ENCODE measurements at regions of chr6 and their contacts with region 1.

Region 1: GRCh38 chr6:53615633-53616449 is 49.7 kb downstream of the KLHL31 start:
- DNase-seq: peak; percentile 92
- H3K4me3 Mint-ChIP-seq: peak overlapping the region; percentile 66
- H3K27ac Mint-ChIP-seq: peak overlapping the region; percentile 97
- H3K4me1 Mint-ChIP-seq: peaks cover 57% of the 10 kb centered on the region
- H3K27me3 Mint-ChIP-seq: no peaks in the 10 kb centered on the region
- CTCF ChIP-seq: no peak

Region 2: DNA sequence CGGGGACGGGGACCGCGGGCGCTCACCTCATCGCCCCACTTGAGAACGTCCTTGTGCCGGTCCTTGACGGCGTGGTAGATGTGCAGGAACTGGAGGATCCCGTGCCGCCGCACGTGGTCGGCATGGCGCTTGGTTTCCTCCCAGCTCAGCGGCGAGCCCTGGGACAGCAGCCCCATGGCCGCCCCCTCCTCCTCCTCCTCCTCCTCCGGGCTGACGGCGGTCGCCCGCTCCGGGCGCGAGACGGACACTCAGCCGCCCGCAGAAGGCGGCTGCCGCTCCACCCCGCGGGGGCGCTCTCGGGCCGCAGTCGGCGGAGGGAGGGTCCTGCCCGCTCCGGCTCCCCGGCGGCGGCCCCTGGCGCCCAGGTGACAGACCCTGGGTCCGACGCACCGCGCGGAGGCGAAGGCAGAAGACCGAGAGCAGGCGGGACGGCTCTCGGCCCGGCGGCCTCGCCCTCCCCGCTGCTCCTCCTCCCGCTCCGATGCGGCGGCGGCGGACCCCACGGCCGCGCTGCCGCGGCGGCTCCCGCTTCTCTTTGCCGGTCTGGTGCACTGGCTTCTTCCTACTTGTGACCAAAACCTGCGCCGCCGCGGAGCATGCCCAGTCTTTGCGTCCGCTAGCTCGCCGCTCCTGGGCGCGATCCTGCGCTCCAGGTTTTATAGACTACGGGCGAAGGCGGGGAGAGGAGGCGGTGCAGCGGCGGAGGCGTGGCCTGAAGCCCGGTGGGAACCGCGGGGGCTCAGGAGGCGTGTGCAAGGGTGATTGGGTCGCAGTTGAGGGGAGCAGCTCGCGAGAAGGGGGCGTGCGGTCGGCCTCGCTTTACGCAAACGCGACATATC is 71.2 kb before region 1 on chr6 and contains the start of gene GCLC:
- CTCF ChIA-PET with region 1: interaction called, 7 read pairs
- POLR2A ChIA-PET with region 1: interaction called, 19 read pairs
- intact Hi-C with region 1: loop called (anchors 2 kb)
- DNase-seq: peak; percentile 96
- H3K4me3 Mint-ChIP-seq: peak within 1 kb of the TSS; percentile 93
- H3K27ac Mint-ChIP-seq: peak within 1 kb of the TSS; percentile 66
- H3K4me1 Mint-ChIP-seq: peaks cover 43% of the 10 kb centered on the region
- H3K27me3 Mint-ChIP-seq: no peaks in the 10 kb centered on the region
- CTCF ChIP-seq: peak; percentile 77
- total RNA-seq, gene GCLC: 74.8 and 108 TPM in 2 replicates

Region 3: DNA sequence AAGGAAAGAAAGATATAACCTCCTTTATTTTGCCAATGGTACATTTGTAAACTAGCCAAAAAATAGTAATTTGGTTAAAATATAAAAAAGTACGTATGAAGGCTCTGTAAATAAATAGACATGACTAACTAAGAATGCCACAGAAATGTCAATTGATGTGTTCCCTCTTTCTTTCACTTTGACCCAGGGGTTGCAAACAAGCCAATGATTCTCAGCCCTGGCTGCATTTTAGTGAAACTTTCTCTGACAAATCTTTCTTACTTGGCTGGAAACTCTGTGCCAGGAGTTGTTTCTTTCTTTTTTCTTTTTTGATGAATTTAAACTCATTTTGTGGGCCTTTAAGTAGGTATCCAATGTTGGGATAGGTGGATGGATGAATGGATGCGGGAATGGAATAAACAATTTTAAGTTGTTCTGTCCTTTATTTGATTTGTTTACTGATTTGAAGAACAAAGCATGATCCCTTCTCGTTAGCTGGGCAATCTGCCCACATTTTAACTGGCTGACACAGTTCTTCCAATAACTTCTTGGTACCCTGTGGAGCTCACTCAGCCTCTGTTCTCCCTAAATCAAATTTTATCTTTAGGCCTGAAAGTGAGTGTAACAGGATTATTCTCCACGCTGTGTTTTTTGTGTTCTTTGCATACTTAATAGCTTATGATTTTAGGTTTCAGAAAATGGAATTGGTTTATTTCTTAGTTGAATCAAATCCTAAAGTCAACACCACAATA is 12.3 kb before region 1 on chr6:
- CTCF ChIA-PET with region 1: interaction called, 3 read pairs
- POLR2A ChIA-PET with region 1: interaction called, 12 read pairs
- intact Hi-C with region 1: no loop called
- DNase-seq: peak; percentile 35
- H3K4me3 Mint-ChIP-seq: no peak overlapping the region
- H3K27ac Mint-ChIP-seq: peak overlapping the region; percentile 77
- H3K4me1 Mint-ChIP-seq: peaks cover 35% of the 10 kb centered on the region
- H3K27me3 Mint-ChIP-seq: no peaks in the 10 kb centered on the region
- CTCF ChIP-seq: no peak

Region 4: GRCh38 chr6:53628354-53629119 is 12.7 kb after region 1 on chr6:
- CTCF ChIA-PET with region 1: interaction called, 4 read pairs
- POLR2A ChIA-PET with region 1: interaction called, 83 read pairs
- intact Hi-C with region 1: no loop called
- DNase-seq: peak; percentile 91
- H3K4me3 Mint-ChIP-seq: peak overlapping the region; percentile 61
- H3K27ac Mint-ChIP-seq: peak overlapping the region; percentile 89
- H3K4me1 Mint-ChIP-seq: peaks cover 54% of the 10 kb centered on the region
- H3K27me3 Mint-ChIP-seq: no peaks in the 10 kb centered on the region
- CTCF ChIP-seq: no peak

Region 5: DNA sequence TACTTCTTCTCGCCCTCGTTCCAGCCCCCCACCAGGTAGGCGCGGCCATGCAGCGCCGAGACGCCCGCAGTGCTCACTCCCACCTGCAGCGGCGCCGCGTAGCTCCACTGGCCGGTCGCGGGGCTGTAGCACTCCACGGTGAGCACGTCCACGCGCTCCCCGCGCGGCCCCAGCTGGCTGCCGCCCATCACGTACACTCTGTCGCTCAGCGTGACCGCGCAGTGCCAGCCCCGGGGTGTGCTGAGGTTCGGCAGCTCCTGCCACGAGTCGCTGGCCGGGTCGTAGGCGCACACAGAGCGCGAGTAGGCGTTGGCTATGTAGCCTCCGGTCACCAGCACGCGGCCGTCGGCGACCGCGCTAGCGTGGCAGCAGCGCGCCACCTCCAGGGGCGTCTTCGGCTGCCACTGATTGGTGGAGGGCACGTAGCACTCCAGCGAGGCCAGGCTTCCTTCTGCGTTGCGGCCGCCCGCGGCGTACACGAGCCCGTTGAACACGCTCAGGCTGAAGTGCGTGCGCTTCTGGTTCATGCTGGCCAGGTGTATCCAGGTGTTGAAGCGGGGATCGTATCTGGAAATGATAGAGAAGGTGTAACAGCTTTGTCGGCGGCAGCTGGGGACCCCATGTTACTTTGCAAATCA is 36.0 kb after region 1 on chr6:
- CTCF ChIA-PET with region 1: interaction called, 14 read pairs
- POLR2A ChIA-PET with region 1: interaction called, 7 read pairs
- intact Hi-C with region 1: no loop called
- DNase-seq: peak; percentile 86
- H3K4me3 Mint-ChIP-seq: peak overlapping the region; percentile 94
- H3K27ac Mint-ChIP-seq: peak overlapping the region; percentile 84
- H3K4me1 Mint-ChIP-seq: peaks cover 34% of the 10 kb centered on the region
- H3K27me3 Mint-ChIP-seq: no peaks in the 10 kb centered on the region
- CTCF ChIP-seq: peak; percentile 23